SK-N-SH (cell line): ENCODE measurements at regions of chr2 and their contacts with region 1.

Region 1: GRCh38 chr2:218852911-218853667 is 6.5 kb upstream of the WNT6 start:
- DNase-seq: peak; percentile 74
- H3K4me3 ChIP-seq: no peak overlapping the region; a peak in 1 of 4 replicates
- H3K27ac ChIP-seq: no peak overlapping the region
- H3K4me1 ChIP-seq: peaks cover 3 to 43% of the 10 kb centered on the region in 2 experiments; a peak in 2 of 4 replicates
- H3K27me3 ChIP-seq: peaks cover 9% of the 10 kb centered on the region; the same call in 1 of the 2 replicates
- CTCF ChIP-seq: peak; percentile 81
- EP300 ChIP-seq: no peak
- RAD21 ChIP-seq: peak; percentile 95

Region 2: GRCh38 chr2:218659258-218659987 is 193.7 kb before region 1 on chr2 and contains the starts of genes BCS1L and ZNF142:
- CTCF ChIA-PET with region 1: interaction called, 25 read pairs
- POLR2A ChIA-PET with region 1: no interaction called
- DNase-seq: peak; percentile 96
- H3K4me3 ChIP-seq: peak within 1 kb of the TSS; percentile 90 to 94
- H3K27ac ChIP-seq: peak within 1 kb of the TSS; percentile 53 to 86
- H3K4me1 ChIP-seq: peaks cover 7 to 13% of the 10 kb centered on the region in 2 experiments; a peak in 2 of 4 replicates
- H3K27me3 ChIP-seq: no peaks in the 10 kb centered on the region
- CTCF ChIP-seq: no peak
- EP300 ChIP-seq: no peak
- RAD21 ChIP-seq: no peak
- polyA plus RNA-seq, gene BCS1L: 47.5 and 59.8 TPM in 2 replicates
- polyA plus RNA-seq, gene ZNF142: 5.7 and 8.1 TPM in 2 replicates

Region 3: DNA sequence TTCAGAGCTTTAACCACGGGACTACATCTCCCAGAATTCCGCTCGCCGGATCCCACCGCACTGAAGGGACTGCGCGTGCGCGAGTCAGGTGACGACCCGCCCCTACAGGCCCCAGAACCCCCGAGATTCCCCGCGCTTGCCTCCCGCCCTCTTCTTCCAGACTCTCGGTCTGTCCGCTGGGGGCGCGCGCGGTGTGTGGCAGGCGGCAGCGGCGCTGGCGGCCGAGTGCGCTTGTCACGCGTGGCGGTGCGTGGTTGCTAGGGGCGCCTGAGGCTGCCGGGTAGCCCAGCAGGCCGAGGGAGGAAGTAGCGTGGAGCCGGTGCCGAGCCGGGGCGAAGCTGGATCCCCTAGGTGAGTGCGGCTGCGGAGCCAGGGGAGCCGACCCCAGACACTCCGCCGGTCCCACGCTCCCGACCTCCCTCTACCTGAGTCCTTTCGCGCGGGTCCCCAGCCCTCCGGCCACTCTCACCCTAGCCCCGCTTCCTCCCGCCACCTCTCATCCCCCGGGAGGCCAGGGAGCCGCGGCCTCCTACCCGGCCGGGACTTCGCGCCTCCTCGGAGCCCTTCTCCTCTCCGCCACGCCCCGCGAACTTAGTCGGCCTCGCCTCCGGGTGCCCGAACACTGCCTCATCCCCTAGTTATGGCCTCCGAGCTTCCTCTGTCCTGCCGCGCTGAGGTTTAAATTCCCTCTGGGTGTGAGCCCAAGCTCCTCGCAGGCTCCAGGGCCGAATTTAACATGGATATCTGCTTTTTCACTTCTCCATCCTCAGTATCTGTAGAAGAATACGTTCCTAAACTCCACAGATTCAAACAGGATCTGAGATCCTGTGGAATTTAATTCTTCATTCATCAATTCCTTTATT is 142.2 kb before region 1 on chr2 and contains the start of gene TTLL4:
- CTCF ChIA-PET with region 1: interaction called, 15 read pairs
- POLR2A ChIA-PET with region 1: no interaction called
- DNase-seq: peak; percentile 99
- H3K4me3 ChIP-seq: peak within 1 kb of the TSS; percentile 74 to 81
- H3K27ac ChIP-seq: peak within 1 kb of the TSS; percentile 74 to 79
- H3K4me1 ChIP-seq: peaks cover 0 to 11% of the 10 kb centered on the region in 2 experiments; a peak in 1 of 4 replicates
- H3K27me3 ChIP-seq: no peaks in the 10 kb centered on the region
- CTCF ChIP-seq: peak; percentile 83
- EP300 ChIP-seq: no peak
- RAD21 ChIP-seq: peak; percentile 59
- polyA plus RNA-seq, gene TTLL4: 15.6 and 18.6 TPM in 2 replicates

Region 4: GRCh38 chr2:218756599-218757377 is 96.3 kb before region 1 on chr2:
- CTCF ChIA-PET with region 1: interaction called, 11 read pairs
- POLR2A ChIA-PET with region 1: no interaction called
- DNase-seq: no peak
- H3K4me3 ChIP-seq: no peak overlapping the region
- H3K27ac ChIP-seq: no peak overlapping the region
- H3K4me1 ChIP-seq: no peaks in the 10 kb centered on the region
- H3K27me3 ChIP-seq: no peaks in the 10 kb centered on the region
- CTCF ChIP-seq: no peak
- EP300 ChIP-seq: no peak
- RAD21 ChIP-seq: no peak

Region 5: DNA sequence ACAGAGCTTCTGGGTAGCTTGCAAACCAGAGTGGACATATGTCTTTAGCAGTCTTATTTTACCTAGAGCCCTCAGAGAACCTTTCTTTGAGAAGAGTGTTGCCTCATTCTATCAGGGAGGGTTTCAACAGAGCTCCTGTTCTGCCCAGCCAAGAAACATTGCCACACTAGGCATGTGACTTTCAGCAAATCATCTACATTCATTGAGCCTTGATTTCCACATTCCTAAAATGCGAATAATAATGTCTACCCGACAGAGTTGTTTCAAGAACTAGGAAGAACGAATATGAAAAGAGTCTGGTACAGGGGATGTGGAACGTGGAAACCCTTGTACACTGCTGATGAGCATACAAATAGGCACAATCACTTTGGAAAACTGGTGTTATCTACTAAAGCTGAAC is 13.7 kb before region 1 on chr2:
- CTCF ChIA-PET with region 1: interaction called, 14 read pairs
- POLR2A ChIA-PET with region 1: no interaction called
- DNase-seq: no peak
- H3K4me3 ChIP-seq: no peak overlapping the region
- H3K27ac ChIP-seq: no peak overlapping the region
- H3K4me1 ChIP-seq: peaks cover 0 to 4% of the 10 kb centered on the region in 2 experiments; a peak in 2 of 4 replicates
- H3K27me3 ChIP-seq: no peaks in the 10 kb centered on the region; the same call in 1 of the 2 replicates
- CTCF ChIP-seq: no peak
- EP300 ChIP-seq: no peak
- RAD21 ChIP-seq: no peak

Region 6: GRCh38 chr2:218892693-218893348 is 39.7 kb after region 1 on chr2:
- CTCF ChIA-PET with region 1: interaction called, 247 read pairs
- POLR2A ChIA-PET with region 1: interaction called, 3 read pairs
- DNase-seq: peak; percentile 92
- H3K4me3 ChIP-seq: peak overlapping the region; percentile 39 to 57; a peak in 3 of 4 replicates
- H3K27ac ChIP-seq: no peak overlapping the region
- H3K4me1 ChIP-seq: peaks cover 0 to 26% of the 10 kb centered on the region in 2 experiments; a peak in 2 of 4 replicates
- H3K27me3 ChIP-seq: peaks cover 39% of the 10 kb centered on the region
- CTCF ChIP-seq: peak; percentile 48
- EP300 ChIP-seq: no peak
- RAD21 ChIP-seq: peak; percentile 34

Region 7: DNA sequence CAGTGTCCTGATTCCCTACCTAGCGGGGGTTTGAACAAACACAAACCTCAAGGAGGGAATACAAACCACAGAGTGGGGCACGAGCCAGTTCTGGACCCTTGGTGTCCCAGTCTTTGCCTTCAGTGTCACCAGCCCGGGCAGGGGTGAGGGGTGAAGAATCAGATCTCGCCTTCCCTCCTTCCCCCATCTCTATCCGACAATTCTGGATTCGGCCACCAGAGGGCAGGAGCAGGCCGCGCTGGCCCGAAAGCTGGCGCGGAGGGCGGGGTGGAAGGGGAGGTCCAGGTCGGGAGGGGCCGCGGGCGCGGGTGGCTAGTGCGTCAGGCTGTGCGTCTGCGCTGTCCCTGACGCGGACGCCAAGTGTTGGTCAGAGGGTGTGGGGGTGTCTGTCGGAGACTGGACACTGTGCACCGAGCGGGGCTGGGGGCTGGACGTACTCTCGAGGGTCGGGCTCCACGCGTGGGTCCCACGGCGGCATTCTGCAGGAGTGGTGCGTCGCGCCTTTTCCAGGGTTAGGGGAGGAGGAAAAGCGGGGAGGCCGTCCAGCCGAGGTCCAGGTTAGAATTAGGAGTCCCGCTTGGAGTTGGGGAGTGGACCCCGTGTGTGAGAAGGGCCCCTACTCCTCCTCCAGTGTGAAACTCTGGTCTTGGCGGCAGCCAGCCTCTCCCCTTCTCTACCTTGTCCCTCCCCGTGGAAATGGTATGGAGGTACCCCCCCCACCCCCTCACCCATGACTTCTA is 143.1 kb after region 1 on chr2:
- CTCF ChIA-PET with region 1: interaction called, 10 read pairs
- POLR2A ChIA-PET with region 1: interaction called, 3 read pairs
- DNase-seq: peak; percentile 96
- H3K4me3 ChIP-seq: peak overlapping the region; percentile 57 to 61
- H3K27ac ChIP-seq: peak overlapping the region in 1 of 2 experiments; percentile 99; a peak in 2 of 4 replicates
- H3K4me1 ChIP-seq: peaks cover 0 to 61% of the 10 kb centered on the region in 2 experiments; a peak in 2 of 4 replicates
- H3K27me3 ChIP-seq: no peaks in the 10 kb centered on the region
- CTCF ChIP-seq: peak; percentile 85
- EP300 ChIP-seq: 0 out of 4 replicates have a peak, but pooled peaks of 1 of the 2 experiments have one; percentile 24
- RAD21 ChIP-seq: peak; percentile 96